ENCODE measurements at regions of chr19 and their contacts with region 1.

Region 1: DNA sequence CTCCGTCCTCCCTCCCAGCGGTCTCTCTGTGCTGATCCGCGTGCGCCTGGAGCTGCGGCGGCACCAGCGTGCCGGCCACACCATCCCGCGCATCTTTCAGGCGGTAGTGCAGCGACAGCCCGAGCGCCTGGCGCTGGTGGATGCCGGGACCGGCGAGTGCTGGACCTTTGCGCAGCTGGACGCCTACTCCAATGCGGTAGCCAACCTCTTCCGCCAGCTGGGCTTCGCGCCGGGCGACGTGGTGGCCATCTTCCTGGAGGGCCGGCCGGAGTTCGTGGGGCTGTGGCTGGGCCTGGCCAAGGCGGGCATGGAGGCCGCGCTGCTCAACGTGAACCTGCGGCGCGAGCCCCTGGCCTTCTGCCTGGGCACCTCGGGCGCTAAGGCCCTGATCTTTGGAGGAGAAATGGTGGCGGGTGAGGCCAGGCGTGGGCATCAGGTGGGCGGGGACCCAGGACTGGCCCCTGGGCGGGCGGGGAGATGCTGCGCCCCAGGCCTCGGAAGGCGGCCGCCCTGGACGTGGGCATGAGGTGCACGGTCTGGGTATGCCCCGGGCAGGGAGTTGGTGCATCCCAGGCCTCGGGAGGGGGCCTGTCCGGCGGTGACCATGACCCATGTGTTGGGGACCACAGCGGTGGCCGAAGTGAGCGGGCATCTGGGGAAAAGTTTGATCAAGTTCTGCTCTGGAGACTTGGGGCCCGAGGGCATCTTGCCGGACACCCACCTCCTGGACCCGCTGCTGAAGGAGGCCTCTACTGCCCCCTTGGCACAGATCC is 16.4 kb downstream of the SLC27A1 start:
- DNase-seq: no peak
- CTCF ChIP-seq: no peak

Region 2: GRCh38 chr19:17475541-17476115 is 11.1 kb before region 1 on chr19:
- CTCF ChIA-PET with region 1: interaction called, 3 read pairs
- POLR2A ChIA-PET with region 1: interaction called, 10 read pairs
- DNase-seq: no peak
- CTCF ChIP-seq: no peak